ENCODE measurements at regions of chr10 and their contacts with region 1.

Region 1: GRCh38 chr10:23095404-23095965 is at the start of gene MSRB2:
- DNase-seq: peak; percentile 60 to 94
- H3K4me3 ChIP-seq: peak within 1 kb of the TSS; percentile 86 to 90
- H3K27ac ChIP-seq: peak within 1 kb of the TSS; percentile 93 to 94
- H3K4me1 ChIP-seq: peaks cover 0 to 11% of the 10 kb centered on the region in 2 donors
- H3K27me3 ChIP-seq: no peaks in the 10 kb centered on the region
- CTCF ChIP-seq: no peak
- total RNA-seq, gene MSRB2: 38.0 TPM

Region 2: GRCh38 chr10:21525367-21526183 is 1569.9 kb before region 1 on chr10 and contains the start of gene SKIDA1:
- intact Hi-C with region 1: loop called (anchors 10 kb)
- DNase-seq: peak; percentile 25 to 90
- H3K4me3 ChIP-seq: peak within 1 kb of the TSS; percentile 65 to 90
- H3K27ac ChIP-seq: peak within 1 kb of the TSS; percentile 98 to 100
- H3K4me1 ChIP-seq: peaks cover 0 to 3% of the 10 kb centered on the region in 2 donors
- H3K27me3 ChIP-seq: no peaks in the 10 kb centered on the region
- CTCF ChIP-seq: no peak
- total RNA-seq, gene SKIDA1: not detected

Region 3: GRCh38 chr10:22325272-22326144 is 770.0 kb before region 1 on chr10:
- intact Hi-C with region 1: loop called (anchors 10 kb)
- DNase-seq: peak in 1 of 2 donors; percentile 89
- H3K4me3 ChIP-seq: peak overlapping the region; percentile 46 to 85
- H3K27ac ChIP-seq: peak overlapping the region; percentile 73 to 75
- H3K4me1 ChIP-seq: peaks cover 8 to 19% of the 10 kb centered on the region in 2 donors
- H3K27me3 ChIP-seq: no peaks in the 10 kb centered on the region
- CTCF ChIP-seq: no peak

Region 4: GRCh38 chr10:22620140-22620857 is 475.2 kb before region 1 on chr10:
- intact Hi-C with region 1: loop called (anchors 1 kb)
- DNase-seq: peak in 1 of 2 donors; percentile 92
- H3K4me3 ChIP-seq: no peak overlapping the region
- H3K27ac ChIP-seq: peak overlapping the region; percentile 47 to 64
- H3K4me1 ChIP-seq: peaks cover 5 to 43% of the 10 kb centered on the region in 2 donors
- H3K27me3 ChIP-seq: no peaks in the 10 kb centered on the region
- CTCF ChIP-seq: no peak

Region 5: DNA sequence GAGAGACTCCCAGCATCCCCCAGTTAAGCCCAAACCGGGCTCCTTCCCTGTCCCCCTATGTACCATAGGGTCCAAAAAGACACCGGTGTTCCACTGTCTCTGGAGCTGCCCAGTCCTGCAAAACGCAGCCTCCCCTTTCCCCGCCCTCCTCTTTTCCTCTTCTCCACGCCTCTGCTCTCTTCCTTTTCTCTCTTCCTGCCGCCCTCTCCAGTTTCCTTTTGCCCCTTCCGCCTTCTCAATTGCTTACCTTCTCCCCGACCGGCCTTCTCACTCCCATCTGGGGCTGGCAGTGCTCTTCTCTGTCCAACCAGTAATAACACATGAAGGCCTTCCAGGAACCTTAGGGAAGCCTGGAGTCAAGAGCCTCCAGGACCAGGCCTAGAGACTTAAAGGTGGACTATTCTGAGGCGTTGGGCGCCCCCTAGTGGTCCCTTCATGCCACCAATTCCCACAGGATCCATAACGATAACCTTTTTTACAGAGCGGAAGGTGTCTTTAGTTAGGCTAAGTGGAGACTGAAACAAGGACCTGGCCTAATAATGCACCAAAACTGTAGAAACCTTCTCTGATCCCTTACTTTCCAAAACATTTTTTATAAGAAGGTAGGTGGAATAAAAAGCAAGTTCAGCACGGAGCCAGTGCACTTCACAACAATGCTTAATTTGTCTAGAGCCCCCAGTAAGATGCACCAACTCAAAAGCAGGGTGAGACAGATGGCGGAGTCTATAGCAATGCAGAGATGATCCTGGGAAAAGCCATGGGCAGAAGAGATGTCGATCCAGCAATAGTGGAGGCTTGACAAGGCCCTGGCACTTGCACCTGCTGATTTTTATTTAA is 27.3 kb before region 1 on chr10:
- intact Hi-C with region 1: loop called (anchors 1 kb)
- DNase-seq: peak in 1 of 2 donors; percentile 93
- H3K4me3 ChIP-seq: no peak overlapping the region
- H3K27ac ChIP-seq: peak overlapping the region; percentile 28 to 33
- H3K4me1 ChIP-seq: peaks cover 5 to 12% of the 10 kb centered on the region in 2 donors
- H3K27me3 ChIP-seq: no peaks in the 10 kb centered on the region
- CTCF ChIP-seq: peak; percentile 44 to 87 (median 86)

Region 6: DNA sequence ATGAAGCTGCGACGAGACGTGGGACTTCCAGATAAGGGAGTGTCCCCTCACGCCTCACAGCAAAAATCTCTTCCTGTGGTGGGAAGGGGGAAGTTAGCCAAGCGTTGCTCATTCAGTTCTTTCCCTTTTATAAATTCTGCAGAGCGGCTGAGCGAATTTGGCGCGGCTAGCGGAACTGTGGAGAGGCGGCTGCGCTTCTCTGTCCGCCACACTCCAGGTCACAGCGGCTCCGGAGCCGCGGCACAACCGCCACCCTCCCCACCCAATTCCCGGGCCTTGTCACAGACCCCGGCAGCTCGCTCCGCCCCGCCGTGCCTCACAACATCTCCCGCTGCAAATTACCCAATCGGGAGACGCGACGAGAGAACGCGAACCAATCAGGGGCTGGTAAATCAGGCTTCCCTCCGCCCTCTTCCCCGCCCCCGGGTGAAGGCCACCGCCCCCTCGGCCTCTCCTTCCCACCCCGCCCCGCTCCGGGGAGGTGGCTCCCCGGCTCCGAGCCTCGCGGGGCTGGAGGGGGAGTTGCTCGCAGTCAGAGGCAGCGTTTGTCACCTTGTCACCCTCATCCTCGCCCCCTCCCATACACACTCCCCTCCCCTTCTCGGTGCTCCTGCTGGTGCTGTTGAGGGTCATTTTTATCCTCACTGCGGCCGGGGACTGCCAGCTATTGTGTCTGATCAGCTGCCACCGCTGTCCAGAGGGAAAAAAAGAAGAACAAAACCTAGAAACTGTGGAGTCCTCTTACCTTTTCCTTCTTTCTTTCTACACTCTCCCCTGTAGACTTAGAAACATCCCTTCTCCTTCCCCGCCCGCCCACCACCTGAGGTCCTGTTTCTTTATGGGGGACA is 1629.1 kb after region 1 on chr10:
- intact Hi-C with region 1: loop called (anchors 10 kb)
- DNase-seq: peak; percentile 94 to 99
- H3K4me3 ChIP-seq: peak overlapping the region; percentile 75 to 83
- H3K27ac ChIP-seq: peak overlapping the region; percentile 92 to 97
- H3K4me1 ChIP-seq: peaks cover 0 to 6% of the 10 kb centered on the region in 2 donors
- H3K27me3 ChIP-seq: no peaks in the 10 kb centered on the region
- CTCF ChIP-seq: no peak